Heart left ventricle (tissue), 16 donors: ENCODE measurements at regions of chr17 and their contacts with region 1.

Region 1: DNA sequence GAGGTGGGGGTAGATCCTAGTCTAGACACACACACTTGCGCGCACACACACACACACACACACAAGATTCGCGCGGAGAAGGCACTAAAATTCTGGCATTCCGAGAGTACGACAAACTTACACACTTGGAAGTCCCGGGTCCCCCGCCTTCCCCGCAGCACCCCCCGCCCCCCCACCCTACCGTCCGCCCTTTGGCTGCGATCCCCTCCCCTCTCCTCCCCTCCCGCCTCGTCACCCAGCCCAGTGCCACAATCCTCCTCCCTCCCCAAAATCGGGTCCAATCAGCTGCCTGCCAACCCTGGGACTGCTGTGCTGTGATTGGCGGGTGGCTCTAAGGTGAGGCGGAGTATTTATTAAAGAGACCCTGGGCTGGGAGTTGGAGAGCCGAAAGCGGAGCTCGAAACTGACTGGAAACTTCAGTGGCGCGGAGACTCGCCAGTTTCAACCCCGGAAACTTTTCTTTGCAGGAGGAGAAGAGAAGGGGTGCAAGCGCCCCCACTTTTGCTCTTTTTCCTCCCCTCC is at the start of gene SOX9:
- DNase-seq: peak; percentile 87 to 94 (median 91)
- ATAC-seq: peak; percentile 91 to 94 (median 93)
- H3K4me3 ChIP-seq: peak within 1 kb of the TSS; percentile 54 to 94 (median 74)
- H3K27ac ChIP-seq: peak within 1 kb of the TSS; percentile 76 to 98 (median 87)
- H3K4me1 ChIP-seq: peaks cover 0 to 65% (median 15%) of the 10 kb centered on the region in 12 donors
- H3K27me3 ChIP-seq: peaks cover 3 to 89% (median 40%) of the 10 kb centered on the region in 9 donors
- CTCF ChIP-seq: no peak
- POLR2A ChIP-seq: peak; percentile 96 to 97
- total RNA-seq, gene SOX9: 8.9 to 19.7 (median 13.7) TPM

Region 2: DNA sequence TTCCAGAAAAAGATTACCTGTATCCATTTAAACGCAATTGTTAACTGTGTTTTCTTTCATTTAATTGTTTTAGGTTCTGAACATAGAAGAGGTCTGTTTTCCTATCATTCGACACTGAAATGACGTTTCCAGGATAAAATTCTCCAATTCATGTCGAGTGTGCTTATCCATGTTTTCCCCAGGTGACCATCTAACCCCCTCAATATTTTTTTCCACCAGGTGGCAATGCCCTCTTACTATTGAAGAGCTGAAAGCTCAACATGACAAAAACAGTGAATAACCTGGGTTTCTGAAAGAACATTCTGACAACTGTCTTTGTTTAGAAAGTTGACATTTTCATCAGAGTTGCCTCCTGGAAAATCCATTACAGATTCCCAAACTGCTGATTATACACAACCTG is 1002.7 kb before region 1 on chr17:
- intact Hi-C with region 1: loop called in 4 of 10 experiments (anchors 5 to 10 kb)
- DNase-seq: no peak
- ATAC-seq: no peak
- H3K4me3 ChIP-seq: no peak overlapping the region
- H3K27ac ChIP-seq: no peak overlapping the region
- H3K4me1 ChIP-seq: no peaks in the 10 kb centered on the region
- H3K27me3 ChIP-seq: peaks cover 0 to 6% (median 0%) of the 10 kb centered on the region in 9 donors
- CTCF ChIP-seq: peak in 11 of 12 donors; percentile 17 to 50 (median 36)
- POLR2A ChIP-seq: no peak

Region 3: DNA sequence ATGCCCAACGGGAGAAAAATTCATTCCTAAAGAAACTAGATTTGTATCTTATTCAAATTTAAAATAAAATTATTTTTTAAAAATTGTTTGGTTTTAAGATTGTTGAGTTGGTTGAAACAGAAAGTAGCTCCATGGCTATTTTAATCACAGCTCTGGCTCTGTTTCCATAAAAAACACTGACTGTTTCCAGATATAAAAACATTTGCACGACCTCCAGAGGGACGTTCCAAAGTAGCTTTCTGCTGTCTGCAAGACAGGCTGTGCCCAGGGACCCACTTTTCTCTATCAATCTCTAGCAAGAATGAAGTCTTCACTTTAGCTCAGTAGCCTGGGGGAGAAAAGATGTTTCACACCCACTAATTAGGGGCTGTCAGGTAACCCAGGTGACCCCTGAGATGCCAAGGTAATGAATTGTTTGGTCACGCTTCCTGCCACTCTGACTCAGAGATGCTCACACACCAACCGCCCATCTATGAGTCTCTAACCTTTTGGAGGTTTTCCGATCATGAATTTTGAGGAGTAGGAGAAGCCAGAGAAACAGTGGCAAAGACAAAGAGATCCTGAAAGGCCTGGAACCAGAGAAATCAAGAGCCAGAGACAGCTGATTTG is 220.0 kb before region 1 on chr17:
- intact Hi-C with region 1: loop called in 1 of 10 experiments (anchors 10 kb)
- DNase-seq: no peak
- ATAC-seq: no peak
- H3K4me3 ChIP-seq: no peak overlapping the region
- H3K27ac ChIP-seq: no peak overlapping the region
- H3K4me1 ChIP-seq: peaks cover 0 to 15% (median 0%) of the 10 kb centered on the region in 12 donors
- H3K27me3 ChIP-seq: no peaks in the 10 kb centered on the region
- CTCF ChIP-seq: no peak
- POLR2A ChIP-seq: no peak

Region 4: DNA sequence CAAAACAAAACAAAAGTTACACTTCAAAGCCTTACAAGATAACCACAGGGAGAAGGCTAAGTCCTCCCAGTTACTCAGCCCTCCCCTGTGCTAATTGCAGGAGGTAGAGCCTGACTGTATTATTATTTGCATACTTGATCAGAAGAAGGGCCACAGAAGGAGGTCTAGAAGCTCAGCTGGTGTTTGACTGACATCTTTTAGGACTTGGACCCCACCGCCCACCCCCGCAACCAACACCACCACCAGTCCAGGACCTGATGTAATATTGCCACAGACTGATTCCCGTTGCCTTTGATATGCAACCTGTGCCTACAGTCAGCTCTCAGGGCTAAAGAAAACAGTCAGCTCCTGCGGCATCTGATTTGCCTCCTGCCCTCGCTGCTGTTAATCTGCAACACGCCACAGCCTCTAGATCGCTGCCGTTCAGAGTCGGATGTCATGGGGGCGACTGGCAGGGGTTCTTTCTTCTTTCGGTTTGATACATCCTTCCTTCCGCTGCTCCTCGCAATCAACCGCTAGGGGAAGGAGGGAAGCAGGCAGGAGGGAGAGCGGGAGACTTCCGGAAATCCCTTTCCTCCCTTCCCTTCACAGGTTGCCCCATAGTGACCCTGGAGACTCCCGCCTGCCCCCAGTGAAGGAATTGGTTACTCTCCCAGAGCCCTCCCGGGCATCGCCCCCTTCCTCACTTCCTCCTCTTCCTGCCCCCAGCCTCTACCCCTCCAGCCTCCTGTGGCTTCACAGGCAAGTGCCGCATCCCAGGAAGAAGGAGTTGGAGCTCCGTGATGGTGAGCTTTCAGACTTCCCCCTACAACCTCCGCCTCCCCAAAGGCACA is 90.4 kb before region 1 on chr17:
- intact Hi-C with region 1: loop called in 1 of 10 experiments (anchors 5 kb)
- DNase-seq: peak; percentile 16 to 58 (median 35)
- ATAC-seq: peak in 3 of 4 donors; percentile 49 to 91 (median 73)
- H3K4me3 ChIP-seq: peak overlapping the region in 11 of 12 donors; percentile 9 to 62 (median 49)
- H3K27ac ChIP-seq: no peak overlapping the region
- H3K4me1 ChIP-seq: peaks cover 0 to 8% (median 0%) of the 10 kb centered on the region in 12 donors
- H3K27me3 ChIP-seq: peaks cover 0 to 29% (median 3%) of the 10 kb centered on the region in 9 donors
- CTCF ChIP-seq: peak in 7 of 12 donors; percentile 22 to 48 (median 31)
- POLR2A ChIP-seq: no peak

Region 5: DNA sequence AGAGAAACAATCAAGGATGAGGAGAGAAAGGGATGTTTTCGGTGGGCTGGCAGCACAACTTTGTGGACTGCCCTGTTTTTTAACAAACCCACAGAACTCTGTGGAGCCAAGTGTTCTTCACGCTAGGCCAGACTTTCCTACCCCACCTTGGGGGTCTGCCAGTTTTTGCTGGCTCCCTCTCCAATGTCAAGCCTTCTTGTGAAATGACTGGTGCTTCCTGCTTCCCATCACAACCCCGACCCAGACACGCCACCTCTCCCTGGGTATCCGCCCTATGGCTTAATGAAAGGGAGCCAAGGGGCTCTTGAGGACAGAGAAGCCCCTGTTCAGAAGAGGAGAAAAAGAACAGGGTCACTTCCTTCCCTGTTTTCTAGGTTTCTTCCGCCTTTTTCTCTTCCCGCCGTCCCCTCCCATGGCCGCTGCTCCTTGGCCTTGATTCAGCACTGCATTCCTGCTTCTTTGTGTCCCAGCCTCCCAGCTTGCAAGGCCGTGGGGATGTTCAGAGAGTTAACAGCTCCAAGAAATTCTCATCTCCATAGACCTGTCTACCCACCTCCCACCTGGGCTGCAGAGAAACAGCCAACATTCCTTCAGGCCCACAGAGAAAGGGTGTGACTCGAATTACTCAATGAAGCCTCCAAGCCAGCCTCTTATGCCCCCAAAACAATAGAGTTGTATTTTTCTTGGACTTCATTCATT is 16.4 kb before region 1 on chr17:
- intact Hi-C with region 1: no loop called
- DNase-seq: peak in 1 of 5 donors; percentile 47
- ATAC-seq: peak in 2 of 4 donors; percentile 45 to 62
- H3K4me3 ChIP-seq: no peak overlapping the region
- H3K27ac ChIP-seq: no peak overlapping the region
- H3K4me1 ChIP-seq: peaks cover 0 to 8% (median 0%) of the 10 kb centered on the region in 12 donors
- H3K27me3 ChIP-seq: peaks cover 0 to 4% (median 0%) of the 10 kb centered on the region in 9 donors
- CTCF ChIP-seq: no peak
- POLR2A ChIP-seq: no peak

Region 6: GRCh38 chr17:72421128-72422092 is 300.7 kb after region 1 on chr17:
- intact Hi-C with region 1: loop called in 1 of 10 experiments (anchors 10 kb)
- DNase-seq: peak in 2 of 5 donors; percentile 30 to 56
- ATAC-seq: peak in 3 of 4 donors; percentile 75 to 84 (median 77)
- H3K4me3 ChIP-seq: no peak overlapping the region
- H3K27ac ChIP-seq: no peak overlapping the region
- H3K4me1 ChIP-seq: peaks cover 0 to 19% (median 5%) of the 10 kb centered on the region in 12 donors
- H3K27me3 ChIP-seq: no peaks in the 10 kb centered on the region
- CTCF ChIP-seq: no peak
- POLR2A ChIP-seq: no peak